Activated B cell treated with CpG ODN at 0.5 μM for 24 hours (primary cell): ENCODE measurements at regions of chr14 and their contacts with region 1.

Region 1: GRCh38 chr14:96584199-96584906 is 82.2 kb downstream of the PAPOLA start:
- DNase-seq: no peak
- ATAC-seq: peak; percentile 58
- H3K4me3 Mint-ChIP-seq: no peak overlapping the region
- H3K27ac Mint-ChIP-seq: no peak overlapping the region
- H3K4me1 Mint-ChIP-seq: peaks cover 25% of the 10 kb centered on the region
- H3K27me3 Mint-ChIP-seq: peaks cover 34% of the 10 kb centered on the region
- CTCF ChIP-seq: no peak

Region 2: GRCh38 chr14:96554315-96554910 is 29.9 kb before region 1 on chr14:
- CTCF ChIA-PET with region 1: no interaction called
- POLR2A ChIA-PET with region 1: no interaction called
- intact Hi-C with region 1: no loop called
- DNase-seq: no peak
- ATAC-seq: no peak
- H3K4me3 Mint-ChIP-seq: no peak overlapping the region
- H3K27ac Mint-ChIP-seq: no peak overlapping the region
- H3K4me1 Mint-ChIP-seq: no peaks in the 10 kb centered on the region
- H3K27me3 Mint-ChIP-seq: no peaks in the 10 kb centered on the region
- CTCF ChIP-seq: no peak

Region 3: DNA sequence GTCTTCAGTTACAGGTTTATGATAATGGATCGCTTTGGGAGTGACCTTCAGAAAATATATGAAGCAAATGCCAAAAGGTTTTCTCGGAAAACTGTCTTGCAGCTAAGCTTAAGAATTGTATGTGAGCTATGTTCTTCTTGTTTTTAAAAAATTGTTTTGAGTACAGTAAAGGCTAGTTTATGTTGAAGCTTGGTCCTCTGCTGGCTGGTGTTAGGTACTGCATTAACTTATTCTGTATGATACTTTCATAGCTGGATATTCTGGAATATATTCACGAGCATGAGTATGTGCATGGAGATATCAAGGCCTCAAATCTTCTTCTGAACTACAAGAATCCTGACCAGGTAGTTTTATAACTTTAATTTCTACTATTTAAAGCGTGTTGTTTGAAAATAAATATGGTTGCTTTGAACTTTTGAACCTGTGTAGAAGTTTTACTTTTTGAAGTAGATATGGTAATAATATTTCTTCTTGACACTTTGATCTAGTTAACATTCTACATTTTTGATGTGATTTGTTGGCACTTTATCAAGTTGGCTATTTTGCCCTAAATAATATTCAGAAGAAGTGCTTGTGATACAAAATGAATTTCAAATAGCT is 268.6 kb after region 1 on chr14:
- CTCF ChIA-PET with region 1: no interaction called
- POLR2A ChIA-PET with region 1: no interaction called
- intact Hi-C with region 1: loop called (anchors 2 kb)
- DNase-seq: no peak
- ATAC-seq: no peak
- H3K4me3 Mint-ChIP-seq: no peak overlapping the region
- H3K27ac Mint-ChIP-seq: no peak overlapping the region
- H3K4me1 Mint-ChIP-seq: peaks cover 2% of the 10 kb centered on the region
- H3K27me3 Mint-ChIP-seq: no peaks in the 10 kb centered on the region
- CTCF ChIP-seq: no peak